Ascending aorta (tissue), 2 donors: ENCODE measurements at regions of chr1 and their contacts with region 1.

Region 1: GRCh38 chr1:212070720-212071302 is 35.3 kb downstream of the DTL start:
- DNase-seq: no peak
- H3K4me3 ChIP-seq: no peak overlapping the region
- H3K27ac ChIP-seq: no peak overlapping the region
- H3K4me1 ChIP-seq: no peaks in the 10 kb centered on the region
- H3K27me3 ChIP-seq: no peaks in the 10 kb centered on the region
- CTCF ChIP-seq: peak; percentile 63 to 89 (median 66)

Region 2: DNA sequence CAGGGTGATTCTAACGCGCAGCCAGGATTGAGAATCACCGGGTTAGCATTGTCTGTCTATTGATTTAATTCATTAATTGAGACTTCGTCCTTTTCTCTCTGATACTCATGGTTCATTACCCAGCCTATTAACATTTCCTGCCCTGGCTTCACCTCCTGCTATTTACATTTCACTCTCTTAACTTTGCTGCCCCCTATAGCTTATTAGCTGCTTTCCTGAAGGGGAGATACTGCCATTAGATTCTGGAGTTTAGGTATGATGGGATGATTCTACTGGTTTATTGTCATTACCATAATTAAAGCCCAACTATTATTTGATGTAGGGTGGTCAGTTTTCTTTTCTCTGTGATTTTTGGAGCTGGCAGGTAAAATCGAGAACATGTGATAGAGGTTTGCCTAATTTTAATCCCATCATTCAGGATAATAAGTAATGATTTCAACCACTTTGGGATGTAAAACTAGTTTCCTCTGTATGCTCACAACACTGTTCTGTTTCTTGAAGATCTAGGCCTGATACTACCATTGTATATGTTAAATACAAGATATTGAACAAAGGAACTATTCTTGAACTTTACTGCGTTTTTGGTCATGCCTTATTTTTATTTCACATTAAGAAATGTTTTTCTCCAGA is 220.8 kb after region 1 on chr1:
- intact Hi-C with region 1: loop called (anchors 5 kb)
- DNase-seq: no peak
- H3K4me3 ChIP-seq: no peak overlapping the region
- H3K27ac ChIP-seq: peak overlapping the region in 1 of 2 donors; percentile 19
- H3K4me1 ChIP-seq: peaks cover 7 to 48% of the 10 kb centered on the region in 2 donors
- H3K27me3 ChIP-seq: no peaks in the 10 kb centered on the region
- CTCF ChIP-seq: peak; percentile 29 to 53 (median 40)

Region 3: DNA sequence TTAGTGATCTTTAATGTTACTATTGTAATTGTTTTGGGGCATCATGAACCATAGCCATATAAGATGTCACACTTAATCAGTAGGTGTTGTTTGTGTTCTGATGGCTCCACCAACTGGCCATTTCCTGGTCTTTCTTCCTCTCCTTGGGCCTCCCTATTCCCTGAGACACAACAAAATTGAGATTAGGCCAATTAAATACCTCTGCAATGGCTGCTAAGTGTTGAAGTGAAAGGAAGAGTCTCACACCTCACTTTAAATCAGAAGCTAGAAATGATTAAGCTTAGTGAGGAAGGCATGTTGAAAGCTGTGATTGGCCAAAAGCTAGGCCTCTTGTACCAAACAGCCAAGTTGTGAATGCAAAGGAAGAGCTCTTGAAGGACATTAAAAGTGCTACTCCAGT is 245.1 kb after region 1 on chr1:
- intact Hi-C with region 1: loop called (anchors 5 kb)
- DNase-seq: no peak
- H3K4me3 ChIP-seq: no peak overlapping the region
- H3K27ac ChIP-seq: peak overlapping the region; percentile 12 to 34
- H3K4me1 ChIP-seq: peaks cover 0 to 9% of the 10 kb centered on the region in 2 donors
- H3K27me3 ChIP-seq: no peaks in the 10 kb centered on the region
- CTCF ChIP-seq: peak in 1 of 3 experiments; percentile 31

Region 4: GRCh38 chr1:212368073-212368484 is 297.3 kb after region 1 on chr1:
- intact Hi-C with region 1: loop called (anchors 1 kb)
- DNase-seq: peak in 1 of 2 donors; percentile 70
- H3K4me3 ChIP-seq: no peak overlapping the region
- H3K27ac ChIP-seq: no peak overlapping the region
- H3K4me1 ChIP-seq: no peaks in the 10 kb centered on the region
- H3K27me3 ChIP-seq: no peaks in the 10 kb centered on the region
- CTCF ChIP-seq: peak; percentile 62 to 84 (median 65)

Region 5: DNA sequence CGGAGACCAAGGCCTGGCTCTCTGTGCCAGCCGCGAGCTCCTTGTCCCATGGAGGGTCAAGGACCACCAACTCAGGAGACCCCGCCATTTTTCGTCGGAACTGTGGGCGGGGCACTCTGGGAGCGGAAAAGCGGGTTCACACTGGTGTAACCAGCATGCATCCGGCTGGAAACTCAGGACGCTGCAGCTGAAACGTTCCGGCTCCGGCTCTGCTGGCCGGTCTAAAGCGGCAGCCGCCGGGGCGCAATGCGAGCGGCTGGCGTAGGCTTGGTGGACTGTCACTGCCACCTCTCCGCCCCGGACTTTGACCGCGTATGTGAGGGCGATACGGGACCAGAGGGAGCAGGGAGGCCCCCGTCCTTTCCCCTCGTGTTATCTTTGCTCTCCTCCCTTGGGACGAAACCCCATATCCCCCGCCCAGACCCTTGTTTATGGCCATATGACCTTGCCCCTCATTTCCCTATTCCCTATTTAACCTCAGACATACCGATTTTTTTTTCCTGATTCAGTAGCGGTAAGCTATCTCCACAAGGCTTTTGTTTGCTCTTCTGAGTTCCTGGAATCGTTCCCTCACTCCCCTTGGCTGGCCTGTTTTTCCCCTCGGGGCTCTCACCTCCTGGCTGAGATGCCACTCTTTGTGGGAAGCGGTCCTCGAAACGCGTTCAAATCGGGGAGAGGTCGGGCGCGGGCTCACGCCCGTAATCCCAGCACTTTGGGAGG is 721.0 kb after region 1 on chr1 and contains the starts of genes NSL1 and TATDN3:
- intact Hi-C with region 1: loop called (anchors 5 kb)
- DNase-seq: peak; percentile 45 to 92
- H3K4me3 ChIP-seq: peak within 1 kb of the TSS; percentile 71 to 94
- H3K27ac ChIP-seq: peak within 1 kb of the TSS; percentile 89 to 93
- H3K4me1 ChIP-seq: peaks cover 0 to 17% of the 10 kb centered on the region in 2 donors
- H3K27me3 ChIP-seq: no peaks in the 10 kb centered on the region
- CTCF ChIP-seq: no peak
- total RNA-seq, gene NSL1: 69.1 TPM
- total RNA-seq, gene TATDN3: 2.7 TPM